ENCODE measurements at regions of chr21 and their contacts with region 1.

Region 1: GRCh38 chr21:38505654-38506515 is 7.6 kb upstream of the ERG start:
- DNase-seq: peak; percentile 62
- ATAC-seq: peak; percentile 95
- H3K4me3 ChIP-seq: no peak overlapping the region
- H3K27ac ChIP-seq: no peak overlapping the region
- H3K4me1 ChIP-seq: peaks cover 17% of the 10 kb centered on the region
- H3K27me3 ChIP-seq: peaks cover 0 to 5% of the 10 kb centered on the region in 2 experiments; a peak in 2 of 5 replicates
- CTCF ChIP-seq: peak; percentile 77
- EP300 ChIP-seq: no peak
- POLR2A ChIP-seq: no peak
- RAD21 ChIP-seq: 0 out of 2 replicates have a peak, but pooled peaks have one; percentile 31

Region 2: GRCh38 chr21:38126669-38127303 is 379.1 kb before region 1 on chr21:
- CTCF ChIA-PET with region 1: no interaction called
- POLR2A ChIA-PET with region 1: no interaction called
- in situ Hi-C with region 1: no loop called
- intact Hi-C with region 1: no loop called
- DNase-seq: peak; percentile 35
- ATAC-seq: peak; percentile 98
- H3K4me3 ChIP-seq: no peak overlapping the region
- H3K27ac ChIP-seq: no peak overlapping the region
- H3K4me1 ChIP-seq: no peaks in the 10 kb centered on the region
- H3K27me3 ChIP-seq: no peaks in the 10 kb centered on the region
- CTCF ChIP-seq: peak; percentile 77
- EP300 ChIP-seq: no peak
- POLR2A ChIP-seq: no peak
- RAD21 ChIP-seq: 0 out of 2 replicates have a peak, but pooled peaks have one; percentile 28

Region 3: DNA sequence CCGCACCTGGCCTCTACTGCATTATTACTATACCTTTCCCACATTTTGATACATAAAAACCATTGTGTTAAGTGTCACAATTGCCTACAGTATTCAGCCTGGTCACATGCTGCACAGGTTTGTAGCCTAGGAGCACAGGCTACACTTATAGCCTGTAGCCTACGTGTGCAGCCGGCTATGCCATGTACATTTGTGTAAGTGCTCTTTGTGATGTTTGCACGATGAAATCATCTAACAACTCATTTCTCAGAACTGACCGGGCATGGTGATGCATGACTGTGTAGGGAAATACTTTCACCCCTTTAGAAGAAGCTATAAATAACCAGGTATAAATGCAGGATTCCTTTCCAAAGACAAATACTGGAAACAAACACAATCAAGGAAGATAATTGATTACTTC is 19.7 kb before region 1 on chr21:
- CTCF ChIA-PET with region 1: no interaction called
- POLR2A ChIA-PET with region 1: no interaction called
- in situ Hi-C with region 1: no loop called
- intact Hi-C with region 1: no loop called
- DNase-seq: no peak
- ATAC-seq: no peak
- H3K4me3 ChIP-seq: no peak overlapping the region
- H3K27ac ChIP-seq: no peak overlapping the region
- H3K4me1 ChIP-seq: peaks cover 15% of the 10 kb centered on the region; the same call in 1 of the 2 replicates
- H3K27me3 ChIP-seq: peaks cover 0 to 3% of the 10 kb centered on the region in 2 experiments; a peak in 2 of 5 replicates
- CTCF ChIP-seq: no peak
- EP300 ChIP-seq: no peak
- POLR2A ChIP-seq: no peak
- RAD21 ChIP-seq: no peak

Region 4: DNA sequence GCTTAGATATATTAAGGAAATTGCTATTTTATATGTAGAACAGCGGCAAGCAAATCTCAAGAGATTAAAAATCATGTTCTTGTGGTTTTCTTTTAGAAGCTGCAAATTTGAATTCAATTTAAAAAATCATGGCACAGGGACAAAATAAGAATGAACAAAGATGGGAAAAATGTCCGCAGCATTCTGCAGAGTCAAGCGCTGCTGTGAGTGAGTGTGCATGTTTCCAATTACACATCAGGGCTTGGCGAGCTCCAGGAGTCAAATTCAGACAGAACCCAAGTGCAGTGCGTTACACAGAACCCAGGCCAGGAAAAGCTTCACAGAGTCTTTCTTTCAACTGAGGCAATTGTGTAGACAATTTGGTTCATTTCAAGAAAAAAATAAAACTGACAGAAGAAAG is 25.7 kb after region 1 on chr21:
- CTCF ChIA-PET with region 1: no interaction called
- POLR2A ChIA-PET with region 1: no interaction called
- in situ Hi-C with region 1: no loop called
- intact Hi-C with region 1: no loop called
- DNase-seq: no peak
- ATAC-seq: no peak
- H3K4me3 ChIP-seq: no peak overlapping the region
- H3K27ac ChIP-seq: no peak overlapping the region
- H3K4me1 ChIP-seq: peaks cover 26% of the 10 kb centered on the region
- H3K27me3 ChIP-seq: no peaks in the 10 kb centered on the region
- CTCF ChIP-seq: no peak
- EP300 ChIP-seq: no peak
- POLR2A ChIP-seq: no peak
- RAD21 ChIP-seq: no peak

Region 5: DNA sequence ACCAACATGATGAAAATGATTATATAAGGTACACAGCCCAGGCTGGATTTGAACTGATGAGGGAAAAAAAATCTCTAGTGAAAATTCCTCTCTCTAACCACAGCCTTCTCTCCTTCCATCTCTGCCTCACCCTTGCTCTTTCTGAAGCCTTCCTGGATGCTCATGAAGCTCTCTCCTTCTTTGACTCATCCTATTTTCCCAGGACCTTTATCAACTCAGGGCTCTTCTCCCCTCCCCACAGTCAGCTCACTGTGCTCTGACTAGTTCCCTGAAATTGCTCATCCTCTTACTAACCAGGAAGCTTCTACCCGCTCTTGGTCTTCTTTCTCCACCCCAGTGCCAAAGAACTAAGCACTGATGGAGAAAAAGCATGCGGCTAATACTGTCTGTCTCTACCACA is 38.8 kb after region 1 on chr21:
- CTCF ChIA-PET with region 1: no interaction called
- POLR2A ChIA-PET with region 1: no interaction called
- in situ Hi-C with region 1: no loop called
- intact Hi-C with region 1: no loop called
- DNase-seq: no peak
- ATAC-seq: no peak
- H3K4me3 ChIP-seq: no peak overlapping the region
- H3K27ac ChIP-seq: no peak overlapping the region
- H3K4me1 ChIP-seq: peaks cover 7% of the 10 kb centered on the region
- H3K27me3 ChIP-seq: peaks cover 2 to 12% of the 10 kb centered on the region in 2 experiments; a peak in 3 of 5 replicates
- CTCF ChIP-seq: no peak
- EP300 ChIP-seq: no peak
- POLR2A ChIP-seq: no peak
- RAD21 ChIP-seq: no peak

Region 6: DNA sequence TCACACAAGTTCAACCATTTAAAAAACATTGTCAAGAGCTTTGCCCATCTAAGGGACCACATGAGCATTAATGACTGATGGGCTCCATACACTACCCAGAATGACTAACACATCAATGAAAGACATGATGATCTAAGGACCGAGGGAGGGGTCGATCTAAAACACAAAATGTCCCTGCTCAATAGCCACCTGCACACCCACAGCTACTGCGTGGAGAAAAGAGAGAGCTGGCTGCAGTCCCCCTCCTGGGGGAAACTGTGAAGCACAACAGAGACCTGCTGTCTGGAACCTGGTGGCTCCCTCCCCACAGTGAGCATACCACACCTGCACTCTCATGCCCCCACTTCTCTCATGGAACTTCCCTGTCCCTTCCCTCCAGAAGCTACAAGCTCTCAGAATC is 122.5 kb after region 1 on chr21:
- CTCF ChIA-PET with region 1: interaction called, 3 read pairs
- POLR2A ChIA-PET with region 1: no interaction called
- in situ Hi-C with region 1: no loop called
- intact Hi-C with region 1: loop called (anchors 5 kb)
- DNase-seq: peak; percentile 2
- ATAC-seq: peak; percentile 80
- H3K4me3 ChIP-seq: no peak overlapping the region
- H3K27ac ChIP-seq: no peak overlapping the region
- H3K4me1 ChIP-seq: peaks cover 2% of the 10 kb centered on the region; the same call in 1 of the 2 replicates
- H3K27me3 ChIP-seq: no peaks in the 10 kb centered on the region; a peak in 2 of 5 replicates
- CTCF ChIP-seq: no peak
- EP300 ChIP-seq: no peak
- POLR2A ChIP-seq: no peak
- RAD21 ChIP-seq: no peak

Region 7: DNA sequence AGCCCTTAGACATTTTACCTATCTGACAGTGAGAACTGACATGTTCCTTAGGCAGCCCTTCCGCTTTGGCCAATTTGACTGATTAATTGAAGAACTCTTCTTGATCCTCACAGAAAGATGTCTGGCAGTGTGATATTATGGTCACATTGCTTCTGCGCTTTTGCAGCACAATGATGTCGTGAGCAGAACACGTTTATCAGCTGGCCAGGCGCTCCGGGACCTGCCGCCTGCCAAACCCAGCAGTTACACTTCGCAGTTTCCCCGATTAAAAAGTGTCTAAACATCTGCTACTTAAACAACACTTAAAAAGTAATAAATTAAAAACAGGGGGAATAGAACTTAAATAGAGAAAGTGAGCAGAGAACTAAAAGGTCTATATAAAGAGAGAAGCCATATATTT is 196.3 kb after region 1 on chr21:
- CTCF ChIA-PET with region 1: no interaction called
- POLR2A ChIA-PET with region 1: no interaction called
- in situ Hi-C with region 1: loop called (anchors 10 kb)
- intact Hi-C with region 1: no loop called
- DNase-seq: no peak
- ATAC-seq: no peak
- H3K4me3 ChIP-seq: no peak overlapping the region
- H3K27ac ChIP-seq: no peak overlapping the region
- H3K4me1 ChIP-seq: no peaks in the 10 kb centered on the region
- H3K27me3 ChIP-seq: peaks cover 1 to 10% of the 10 kb centered on the region in 2 experiments; a peak in 2 of 5 replicates
- CTCF ChIP-seq: no peak
- EP300 ChIP-seq: no peak
- POLR2A ChIP-seq: no peak
- RAD21 ChIP-seq: no peak

Region 8: GRCh38 chr21:38712071-38712470 is 206.2 kb after region 1 on chr21:
- CTCF ChIA-PET with region 1: interaction called, 13 read pairs
- POLR2A ChIA-PET with region 1: no interaction called
- in situ Hi-C with region 1: loop called (anchors 10 kb)
- intact Hi-C with region 1: loop called (anchors 1 kb)
- DNase-seq: peak; percentile 62
- ATAC-seq: peak; percentile 98
- H3K4me3 ChIP-seq: no peak overlapping the region
- H3K27ac ChIP-seq: no peak overlapping the region
- H3K4me1 ChIP-seq: no peaks in the 10 kb centered on the region
- H3K27me3 ChIP-seq: peaks cover 0 to 3% of the 10 kb centered on the region in 2 experiments; a peak in 1 of 5 replicates
- CTCF ChIP-seq: peak; percentile 79
- EP300 ChIP-seq: no peak
- POLR2A ChIP-seq: no peak
- RAD21 ChIP-seq: peak; percentile 41; the same call in 1 of the 2 replicates

Measured in HepG2 (cell line).